ENCODE measurements at regions of chr21 and their contacts with region 1.

Region 1: DNA sequence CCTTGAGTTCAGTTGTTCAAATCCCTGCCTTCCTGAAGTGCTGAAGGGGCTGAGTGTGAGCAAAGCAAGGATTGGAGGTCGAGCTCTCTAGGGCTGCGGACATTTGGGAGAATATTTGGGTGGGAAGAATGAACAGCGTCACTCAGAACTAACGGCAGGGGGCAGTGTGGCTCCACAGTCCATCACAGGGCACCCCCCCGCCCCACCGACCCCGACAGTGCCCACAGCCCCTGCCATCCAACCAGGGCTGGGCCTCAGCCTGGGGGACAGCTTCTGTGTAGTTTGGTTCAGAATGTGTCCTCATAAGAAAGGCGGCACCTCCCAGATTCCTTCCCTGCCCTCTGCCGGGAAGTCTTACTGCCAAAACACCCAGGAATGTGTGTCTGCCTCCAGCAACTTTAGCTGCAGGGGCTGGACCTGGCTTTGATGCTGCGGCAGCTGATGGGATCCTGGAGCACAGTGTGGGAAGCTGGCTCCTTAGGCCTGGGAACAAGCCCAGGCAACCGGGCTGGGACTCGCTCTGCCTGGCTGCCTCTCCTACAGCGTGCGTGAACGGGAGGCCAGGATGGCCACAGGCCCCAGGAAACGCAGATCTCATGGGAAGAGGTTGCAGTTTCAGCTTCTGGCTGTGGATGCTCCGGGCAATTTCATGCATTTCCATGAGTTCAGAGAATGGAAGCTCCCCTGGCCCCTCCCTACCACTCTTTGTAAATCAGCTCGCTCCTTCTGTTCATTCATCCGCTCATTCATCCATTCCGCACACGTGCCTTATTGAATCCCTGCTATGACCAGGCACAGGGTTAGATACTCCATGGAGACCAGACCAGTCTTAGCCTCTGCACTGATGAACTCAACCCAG is 104.9 kb upstream of the TMPRSS2 start:
- DNase-seq: peak; percentile 80 to 97
- H3K4me3 ChIP-seq: no peak overlapping the region
- H3K27ac ChIP-seq: peak overlapping the region; percentile 94 to 98
- H3K4me1 ChIP-seq: peaks cover 31 to 53% of the 10 kb centered on the region in 2 donors
- H3K27me3 ChIP-seq: no peaks in the 10 kb centered on the region
- CTCF ChIP-seq: peak; percentile 87 to 89 (median 87)

Region 2: GRCh38 chr21:41570791-41571355 is 42.0 kb before region 1 on chr21:
- intact Hi-C with region 1: no loop called
- DNase-seq: no peak
- H3K4me3 ChIP-seq: no peak overlapping the region
- H3K27ac ChIP-seq: no peak overlapping the region
- H3K4me1 ChIP-seq: no peaks in the 10 kb centered on the region
- H3K27me3 ChIP-seq: no peaks in the 10 kb centered on the region
- CTCF ChIP-seq: no peak

Region 3: DNA sequence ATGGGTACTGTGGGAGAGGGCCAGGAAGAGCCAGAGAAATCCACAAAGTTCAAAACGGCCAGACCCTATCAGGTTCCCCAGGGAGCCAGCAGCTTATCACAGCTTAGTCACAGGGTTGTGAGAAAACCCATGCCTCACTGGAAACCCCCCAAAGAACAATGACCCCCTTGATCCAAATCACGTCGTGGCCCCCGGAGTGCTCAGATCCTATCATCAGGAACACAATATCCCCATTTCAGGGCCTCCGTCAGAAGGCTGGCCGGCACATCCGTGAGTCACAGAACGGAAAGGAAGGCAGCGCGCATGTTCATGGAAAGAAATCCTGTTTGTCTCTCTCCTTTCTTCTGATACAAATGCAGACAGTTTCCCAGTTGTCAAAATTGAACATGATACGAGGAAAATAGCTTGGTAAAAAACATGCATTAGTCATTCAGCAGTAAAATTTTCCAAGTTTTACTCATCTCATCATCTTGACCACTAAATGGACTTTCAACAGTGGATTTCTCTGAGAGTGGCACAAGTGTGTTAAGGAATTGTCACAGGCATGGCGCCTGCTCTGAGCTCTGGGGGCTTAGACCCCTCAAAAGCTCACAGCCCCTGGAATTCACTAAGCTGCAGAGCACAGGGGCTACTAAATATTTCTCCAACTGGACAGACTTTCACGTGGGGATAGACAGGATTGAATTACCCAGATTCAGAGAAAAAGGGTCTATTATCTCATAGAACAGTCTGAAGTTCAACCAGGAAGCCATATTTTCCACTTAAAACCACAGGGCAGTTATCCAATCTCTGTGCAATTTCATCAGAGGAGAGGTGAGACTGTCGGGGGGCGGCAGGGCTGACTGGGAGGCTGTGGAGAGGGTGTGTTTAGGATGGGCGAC is 29.2 kb after region 1 on chr21:
- intact Hi-C with region 1: loop called (anchors 1 kb)
- DNase-seq: peak; percentile 47 to 92
- H3K4me3 ChIP-seq: no peak overlapping the region
- H3K27ac ChIP-seq: peak overlapping the region; percentile 90 to 91
- H3K4me1 ChIP-seq: peaks cover 5 to 19% of the 10 kb centered on the region in 2 donors
- H3K27me3 ChIP-seq: no peaks in the 10 kb centered on the region
- CTCF ChIP-seq: no peak

Region 4: DNA sequence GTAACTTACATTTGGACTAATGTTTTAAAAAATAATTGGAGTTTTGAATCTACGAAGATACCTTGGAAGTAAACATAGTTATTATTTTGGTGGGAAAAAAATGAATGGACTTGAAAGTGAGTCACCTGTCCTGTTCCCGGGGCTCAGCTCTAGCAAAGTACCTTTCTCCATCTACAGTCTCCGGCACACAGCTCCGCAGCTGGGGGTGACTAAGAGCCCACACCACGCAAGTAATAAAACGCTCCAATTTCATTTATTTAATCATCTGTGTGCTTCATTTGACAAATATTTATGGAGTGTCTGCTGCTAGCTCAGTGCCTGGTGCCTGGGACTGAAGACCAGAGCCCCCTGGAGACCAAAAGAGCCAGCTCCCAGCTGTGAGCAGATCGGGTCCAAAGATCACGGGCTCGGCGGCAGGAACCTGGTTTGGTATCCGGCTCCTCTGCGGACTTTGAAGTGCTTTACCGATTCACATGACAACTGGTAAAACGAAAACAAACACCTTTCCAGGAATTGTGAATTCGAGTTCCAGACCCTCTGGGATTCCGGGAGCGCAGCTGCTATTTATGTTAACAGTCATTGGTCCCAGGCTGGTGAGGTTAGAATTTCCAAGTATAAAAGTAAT is 155.6 kb after region 1 on chr21:
- intact Hi-C with region 1: loop called (anchors 1 kb)
- DNase-seq: peak in 1 of 2 donors; percentile 74
- H3K4me3 ChIP-seq: peak overlapping the region; percentile 58 to 60
- H3K27ac ChIP-seq: peak overlapping the region; percentile 74 to 83
- H3K4me1 ChIP-seq: peaks cover 0 to 11% of the 10 kb centered on the region in 2 donors
- H3K27me3 ChIP-seq: no peaks in the 10 kb centered on the region
- CTCF ChIP-seq: peak in 2 of 3 experiments; percentile 15 to 28

Region 5: DNA sequence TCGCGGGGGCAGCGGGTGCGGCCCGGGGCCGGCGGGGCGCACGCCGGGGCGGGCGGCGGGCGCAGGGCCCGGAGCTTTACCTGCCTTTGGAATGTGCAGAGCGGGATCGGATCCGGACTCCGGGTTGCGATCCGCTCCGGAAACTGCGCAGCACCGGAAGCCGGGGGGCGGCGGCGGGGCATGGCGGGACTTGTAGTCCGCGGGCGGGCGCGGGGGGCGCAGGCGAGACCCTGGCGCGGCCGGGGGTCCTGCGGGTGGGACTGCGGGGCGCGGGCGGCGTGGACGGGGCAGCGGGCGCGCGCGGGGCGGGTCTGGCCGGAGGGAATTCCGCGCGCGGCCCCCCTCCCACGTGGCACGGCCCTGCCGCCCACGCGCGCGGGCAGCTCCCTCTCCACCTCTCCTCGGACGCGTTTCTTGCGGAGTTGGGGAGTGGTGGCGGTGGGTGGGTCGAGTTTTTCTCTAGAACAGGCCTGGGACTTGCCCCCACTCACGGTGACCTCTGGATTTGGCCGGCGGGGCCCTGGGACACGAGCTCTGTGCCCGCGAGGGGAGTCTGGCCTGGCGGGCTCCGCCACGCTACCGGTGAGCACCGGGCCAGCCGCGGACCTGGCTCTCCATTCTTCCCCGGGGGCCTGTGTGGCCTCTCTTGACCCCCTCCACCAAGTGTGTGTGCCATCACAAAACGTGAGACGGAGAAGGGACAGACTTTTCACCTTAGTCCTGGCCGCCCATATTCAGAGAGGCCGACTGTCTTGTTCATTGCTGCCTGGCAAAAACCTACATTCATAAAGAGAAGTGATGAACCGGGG is 266.5 kb after region 1 on chr21 and contains the start of gene PRDM15:
- intact Hi-C with region 1: loop called (anchors 5 kb)
- DNase-seq: peak in 1 of 2 donors; percentile 88
- H3K4me3 ChIP-seq: peak within 1 kb of the TSS; percentile 87 to 97
- H3K27ac ChIP-seq: peak within 1 kb of the TSS; percentile 73 to 81
- H3K4me1 ChIP-seq: peaks cover 0 to 2% of the 10 kb centered on the region in 2 donors
- H3K27me3 ChIP-seq: no peaks in the 10 kb centered on the region
- CTCF ChIP-seq: no peak
- total RNA-seq, gene PRDM15: 20.5 TPM

Region 6: DNA sequence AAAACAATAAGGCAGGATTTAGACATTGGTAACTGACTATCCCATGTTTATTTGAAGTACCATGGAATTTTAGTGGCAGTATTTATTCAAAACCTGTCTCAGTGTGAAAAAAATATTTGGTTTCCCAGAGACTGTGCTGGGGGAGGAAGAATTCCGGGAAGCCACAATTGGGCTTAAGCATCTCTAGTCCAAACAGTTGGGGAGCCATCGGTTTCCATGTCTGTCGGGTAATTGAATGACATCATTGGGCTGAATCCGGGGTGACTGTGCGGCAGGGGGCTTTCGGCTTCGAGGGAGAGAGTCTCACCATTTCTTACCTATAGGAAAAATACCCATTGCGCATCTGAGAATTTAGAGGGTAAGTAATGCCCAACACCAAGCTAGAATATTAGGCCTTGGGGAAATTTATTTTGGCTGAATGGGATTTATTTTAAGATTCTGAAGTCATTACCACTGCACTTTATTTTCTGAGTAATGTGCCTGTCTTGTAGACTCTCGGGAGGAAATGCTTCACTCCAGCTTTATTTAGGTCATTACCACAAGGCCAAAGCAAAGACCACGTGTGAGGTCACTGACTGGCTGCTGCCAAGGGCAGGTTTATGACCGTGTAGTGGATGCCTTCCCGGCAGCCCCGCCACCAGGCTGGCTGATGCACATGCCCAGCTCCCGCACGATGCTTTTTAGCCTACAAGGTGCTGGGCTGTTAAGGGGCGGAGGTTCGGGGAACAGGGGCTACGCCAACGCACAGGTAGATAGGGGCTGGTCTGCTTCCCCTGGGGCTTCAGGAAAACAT is 435.1 kb after region 1 on chr21:
- intact Hi-C with region 1: loop called (anchors 10 kb)
- DNase-seq: peak; percentile 80 to 96
- H3K4me3 ChIP-seq: no peak overlapping the region
- H3K27ac ChIP-seq: peak overlapping the region; percentile 88 to 90
- H3K4me1 ChIP-seq: peaks cover 4 to 20% of the 10 kb centered on the region in 2 donors
- H3K27me3 ChIP-seq: no peaks in the 10 kb centered on the region
- CTCF ChIP-seq: peak in 2 of 3 experiments; percentile 8 to 27

Measured in ascending aorta (tissue), 2 donors.